Transverse colon (tissue), 4 donors: ENCODE measurements at regions of chr3 and their contacts with region 1.

Region 1: GRCh38 chr3:117165601-117166051 is 456.0 kb downstream of the TUSC7 start:
- DNase-seq: no peak
- H3K4me3 ChIP-seq: no peak overlapping the region
- H3K27ac ChIP-seq: no peak overlapping the region
- H3K4me1 ChIP-seq: no peaks in the 10 kb centered on the region
- H3K27me3 ChIP-seq: no peaks in the 10 kb centered on the region
- CTCF ChIP-seq: no peak
- EP300 ChIP-seq: no peak
- POLR2A ChIP-seq: no peak

Region 2: DNA sequence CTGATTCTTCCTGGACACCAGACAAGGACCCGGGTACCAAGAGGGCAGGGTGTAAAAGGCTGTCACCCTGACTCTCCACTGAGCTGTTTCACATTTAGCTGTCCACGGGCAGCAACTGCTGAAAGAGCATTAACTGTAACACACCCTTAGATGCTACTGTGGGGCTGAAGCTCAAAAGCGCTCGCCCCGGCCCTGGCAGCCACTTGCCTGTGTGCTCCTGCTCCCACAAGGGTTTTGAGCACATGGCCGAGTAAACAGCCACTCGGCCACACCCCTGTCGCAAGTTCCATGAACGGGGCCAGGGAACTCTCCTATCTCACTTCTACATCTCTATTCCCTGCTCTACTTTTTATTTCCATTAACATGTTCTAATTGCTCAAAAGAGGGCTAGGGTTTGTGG is 34.4 kb before region 1 on chr3:
- in situ Hi-C with region 1: no loop called
- intact Hi-C with region 1: loop called (anchors 1 kb)
- DNase-seq: peak; percentile 19
- H3K4me3 ChIP-seq: no peak overlapping the region
- H3K27ac ChIP-seq: no peak overlapping the region
- H3K4me1 ChIP-seq: peaks cover 0 to 16% (median 7%) of the 10 kb centered on the region in 4 donors
- H3K27me3 ChIP-seq: no peaks in the 10 kb centered on the region
- CTCF ChIP-seq: no peak
- EP300 ChIP-seq: no peak
- POLR2A ChIP-seq: no peak